ENCODE measurements at regions of chr6 and their contacts with region 1.

Region 1: DNA sequence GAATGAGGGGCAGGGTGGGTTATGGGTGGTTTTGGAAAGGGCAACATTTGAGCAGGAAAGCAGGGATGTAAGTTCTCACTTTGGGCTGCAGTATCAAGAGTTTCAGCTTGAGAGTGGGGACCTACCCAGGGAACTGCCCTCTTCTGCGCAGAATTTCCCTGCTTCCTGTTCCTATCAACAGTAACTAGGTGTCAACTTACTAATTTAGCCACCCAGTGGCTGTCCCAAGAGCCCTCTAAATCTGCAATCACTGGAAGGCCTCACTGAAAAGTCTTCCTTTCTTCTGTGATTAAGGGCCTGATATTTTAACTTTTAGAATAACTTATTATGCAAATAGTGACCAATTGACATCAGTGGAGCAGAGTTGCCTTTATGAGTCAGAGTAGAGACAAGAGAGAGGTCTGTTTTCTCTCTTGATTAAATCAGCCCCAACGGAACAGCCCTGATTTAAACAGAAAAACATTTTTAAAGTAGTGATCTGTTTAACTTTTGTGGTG is 118.2 kb upstream of the RIPOR2 start:
- DNase-seq: no peak
- H3K4me3 Mint-ChIP-seq: no peak overlapping the region
- H3K27ac Mint-ChIP-seq: peak overlapping the region; percentile 73
- H3K4me1 Mint-ChIP-seq: peaks cover 76% of the 10 kb centered on the region
- H3K27me3 Mint-ChIP-seq: no peaks in the 10 kb centered on the region

Region 2: DNA sequence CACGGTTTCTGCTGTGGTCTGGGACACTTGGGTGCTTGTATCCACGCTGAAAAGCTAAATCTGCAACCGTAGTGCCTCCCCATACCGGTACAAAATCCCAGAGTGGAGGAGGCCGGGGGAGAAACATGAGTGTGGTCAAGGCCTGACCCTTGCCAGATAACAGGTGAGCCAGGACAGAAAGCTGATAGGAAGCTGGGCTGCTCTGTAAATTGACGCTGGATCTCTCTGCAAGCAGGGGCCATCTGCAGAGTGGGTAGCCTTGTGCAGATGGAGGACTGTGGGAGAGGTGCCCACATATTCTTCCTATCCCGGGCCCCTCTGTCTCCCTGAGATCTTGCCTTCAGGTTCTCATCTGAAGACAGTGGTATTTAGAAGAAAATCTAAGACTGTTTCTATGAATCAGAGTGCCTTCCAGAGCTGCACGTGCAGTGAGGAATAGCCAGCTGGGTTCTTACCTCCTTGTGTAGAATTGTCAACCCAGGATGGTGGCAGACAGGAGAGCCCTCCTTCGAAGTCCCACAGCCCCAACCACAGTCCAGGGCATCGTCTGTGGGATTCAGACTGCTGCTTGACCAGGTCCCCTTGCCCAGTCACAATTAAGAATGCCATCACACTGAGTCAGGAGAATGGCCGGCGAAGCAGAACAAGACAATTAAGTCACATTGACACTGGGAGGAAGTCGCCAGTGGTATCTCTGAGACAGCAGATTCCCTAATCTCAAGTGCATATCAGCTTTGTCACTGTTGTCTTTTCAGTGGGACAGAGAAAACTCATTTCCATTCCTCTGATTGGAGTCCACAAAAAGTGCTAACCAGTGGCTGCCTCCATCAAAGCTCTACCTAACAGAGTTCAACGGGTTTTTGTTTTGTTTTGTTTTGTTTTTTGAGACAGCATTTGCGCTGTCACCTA is 18.1 kb before region 1 on chr6:
- CTCF ChIA-PET with region 1: interaction called, 12 read pairs
- POLR2A ChIA-PET with region 1: no interaction called
- DNase-seq: peak; percentile 24
- H3K4me3 Mint-ChIP-seq: peak overlapping the region; percentile 72
- H3K27ac Mint-ChIP-seq: peak overlapping the region; percentile 89
- H3K4me1 Mint-ChIP-seq: peaks cover 66% of the 10 kb centered on the region
- H3K27me3 Mint-ChIP-seq: no peaks in the 10 kb centered on the region

Region 3: GRCh38 chr6:25042036-25042521 is 11.8 kb before region 1 on chr6:
- CTCF ChIA-PET with region 1: interaction called, 12 read pairs
- POLR2A ChIA-PET with region 1: interaction called, 3 read pairs
- DNase-seq: peak; percentile 57
- H3K4me3 Mint-ChIP-seq: peak overlapping the region; percentile 94
- H3K27ac Mint-ChIP-seq: peak overlapping the region; percentile 95
- H3K4me1 Mint-ChIP-seq: peaks cover 58% of the 10 kb centered on the region
- H3K27me3 Mint-ChIP-seq: no peaks in the 10 kb centered on the region

Region 4: GRCh38 chr6:25193460-25194171 is 139.7 kb after region 1 on chr6:
- CTCF ChIA-PET with region 1: no interaction called
- POLR2A ChIA-PET with region 1: no interaction called
- DNase-seq: no peak
- H3K4me3 Mint-ChIP-seq: no peak overlapping the region
- H3K27ac Mint-ChIP-seq: no peak overlapping the region
- H3K4me1 Mint-ChIP-seq: no peaks in the 10 kb centered on the region
- H3K27me3 Mint-ChIP-seq: peaks cover 17% of the 10 kb centered on the region